Caco-2 (cell line): ENCODE measurements at regions of chr11 and their contacts with region 1.

Region 1: GRCh38 chr11:83724008-83724461 is 437.9 kb upstream of the CCDC90B start:
- DNase-seq: peak; percentile 81 to 83
- H3K4me3 ChIP-seq: peak overlapping the region; percentile 28
- H3K4me3 Mint-ChIP-seq: peak overlapping the region; percentile 84
- H3K27ac Mint-ChIP-seq: peak overlapping the region; percentile 96
- H3K4me1 ChIP-seq: peaks cover 48% of the 10 kb centered on the region
- H3K4me1 Mint-ChIP-seq: peaks cover 39% of the 10 kb centered on the region
- H3K27me3 ChIP-seq: no peaks in the 10 kb centered on the region
- H3K27me3 Mint-ChIP-seq: no peaks in the 10 kb centered on the region
- CTCF ChIP-seq: peak; percentile 75 to 78

Region 2: DNA sequence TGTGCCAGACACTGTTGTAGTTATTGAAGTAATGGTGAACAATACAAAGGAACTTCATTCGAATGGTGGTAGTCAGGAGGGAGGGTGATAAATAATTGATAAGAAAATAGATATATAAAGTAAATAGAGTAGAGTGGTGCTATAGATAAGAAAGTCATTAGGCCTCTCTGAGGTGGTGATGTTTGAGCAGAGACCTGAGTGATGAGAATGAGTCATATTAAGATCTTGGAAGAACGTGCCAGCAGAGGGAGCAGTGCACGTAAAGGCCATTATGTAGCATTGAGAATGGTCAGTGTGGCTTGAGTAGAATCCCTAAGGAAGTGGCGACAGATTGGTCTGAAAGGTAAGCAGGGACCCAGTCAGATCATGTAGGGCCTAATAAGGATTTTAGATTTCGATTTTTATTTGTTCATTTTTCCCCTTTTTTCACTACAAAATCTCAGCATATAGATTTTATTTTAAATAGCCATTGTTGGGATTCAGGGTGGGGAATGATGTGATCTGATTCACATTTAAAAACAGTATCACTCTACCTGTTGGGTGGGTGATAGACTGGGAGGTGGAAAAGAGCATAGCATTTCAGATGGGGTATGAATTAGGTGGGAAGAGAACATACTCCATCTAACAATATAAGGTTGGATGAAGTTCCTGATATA is 482.6 kb before region 1 on chr11:
- CTCF ChIA-PET with region 1: no interaction called
- POLR2A ChIA-PET with region 1: no interaction called
- intact Hi-C with region 1: loop called (anchors 1 kb)
- DNase-seq: peak; percentile 86
- H3K4me3 ChIP-seq: no peak overlapping the region
- H3K4me3 Mint-ChIP-seq: no peak overlapping the region
- H3K27ac Mint-ChIP-seq: no peak overlapping the region
- H3K4me1 ChIP-seq: peaks cover 9% of the 10 kb centered on the region
- H3K4me1 Mint-ChIP-seq: peaks cover 21% of the 10 kb centered on the region
- H3K27me3 ChIP-seq: no peaks in the 10 kb centered on the region
- H3K27me3 Mint-ChIP-seq: no peaks in the 10 kb centered on the region
- CTCF ChIP-seq: peak; percentile 86 to 92

Region 3: GRCh38 chr11:83292709-83293456 is 431.2 kb before region 1 on chr11:
- CTCF ChIA-PET with region 1: interaction called, 82 read pairs
- POLR2A ChIA-PET with region 1: interaction called, 4 read pairs
- intact Hi-C with region 1: loop called (anchors 1 kb)
- DNase-seq: peak; percentile 51 to 77
- H3K4me3 ChIP-seq: no peak overlapping the region
- H3K4me3 Mint-ChIP-seq: no peak overlapping the region
- H3K27ac Mint-ChIP-seq: no peak overlapping the region
- H3K4me1 ChIP-seq: no peaks in the 10 kb centered on the region
- H3K4me1 Mint-ChIP-seq: no peaks in the 10 kb centered on the region
- H3K27me3 ChIP-seq: no peaks in the 10 kb centered on the region; the same call in 1 of the 2 replicates
- H3K27me3 Mint-ChIP-seq: peaks cover 4% of the 10 kb centered on the region
- CTCF ChIP-seq: peak; percentile 89 to 95

Region 4: DNA sequence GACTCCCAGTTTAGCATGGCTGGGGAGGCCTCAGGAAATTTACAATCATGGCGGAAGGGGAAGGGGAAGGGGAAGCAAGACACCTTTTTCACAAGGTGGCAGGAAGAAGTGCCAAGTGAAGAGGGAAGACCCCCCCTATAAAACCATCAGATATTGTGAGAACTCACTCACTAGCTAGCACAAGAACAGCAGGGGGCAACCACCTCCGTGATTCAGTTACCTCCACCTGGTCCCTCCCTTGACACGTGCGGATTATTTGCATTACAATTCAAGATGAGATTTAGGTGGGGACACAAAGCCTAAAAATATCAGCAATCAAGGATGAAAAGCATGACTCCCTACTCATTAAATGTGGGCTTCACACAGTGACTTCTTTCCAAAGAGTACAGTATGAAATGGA is 282.9 kb before region 1 on chr11:
- CTCF ChIA-PET with region 1: interaction called, 4 read pairs
- POLR2A ChIA-PET with region 1: no interaction called
- intact Hi-C with region 1: loop called (anchors 1 kb)
- DNase-seq: no peak
- H3K4me3 ChIP-seq: no peak overlapping the region
- H3K4me3 Mint-ChIP-seq: no peak overlapping the region
- H3K27ac Mint-ChIP-seq: no peak overlapping the region
- H3K4me1 ChIP-seq: no peaks in the 10 kb centered on the region
- H3K4me1 Mint-ChIP-seq: no peaks in the 10 kb centered on the region
- H3K27me3 ChIP-seq: no peaks in the 10 kb centered on the region
- H3K27me3 Mint-ChIP-seq: no peaks in the 10 kb centered on the region
- CTCF ChIP-seq: peak; percentile 19 to 36

Region 5: DNA sequence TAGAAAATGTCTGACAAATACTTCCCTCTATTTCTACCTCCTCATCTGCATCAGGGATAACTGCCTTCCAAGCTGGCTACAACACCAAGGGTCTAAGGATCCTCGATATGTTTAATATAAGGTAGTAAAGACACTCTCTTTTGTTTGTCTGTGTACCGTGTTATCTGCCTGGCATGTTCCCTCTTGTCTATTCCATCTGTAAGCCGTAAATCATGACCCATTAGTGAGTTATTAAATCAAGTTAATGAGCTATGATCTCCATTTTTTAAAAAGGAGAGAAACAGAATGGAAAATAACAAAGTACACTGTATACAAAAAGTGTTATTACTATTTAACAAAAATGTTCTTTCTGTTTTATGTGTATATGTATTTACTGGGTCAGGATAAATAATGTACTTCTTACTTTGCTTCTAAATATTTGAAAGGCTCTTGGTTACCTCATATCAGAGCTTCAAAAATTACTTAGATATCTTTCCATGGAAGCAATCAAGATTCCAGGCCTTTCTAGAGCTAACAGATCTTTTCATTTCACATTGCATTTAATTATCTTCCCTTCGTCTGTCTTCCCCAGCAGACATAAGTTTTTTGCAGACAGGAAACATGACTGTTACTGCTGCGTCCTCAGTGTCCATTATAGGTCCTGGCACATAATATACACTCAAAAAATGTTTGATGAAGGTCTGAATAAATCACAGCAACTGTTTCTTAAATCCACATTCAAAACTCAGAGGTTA is 95.2 kb before region 1 on chr11:
- CTCF ChIA-PET with region 1: interaction called, 12 read pairs
- POLR2A ChIA-PET with region 1: no interaction called
- intact Hi-C with region 1: loop called (anchors 1 kb)
- DNase-seq: no peak
- H3K4me3 ChIP-seq: no peak overlapping the region
- H3K4me3 Mint-ChIP-seq: no peak overlapping the region
- H3K27ac Mint-ChIP-seq: no peak overlapping the region
- H3K4me1 ChIP-seq: peaks cover 9% of the 10 kb centered on the region
- H3K4me1 Mint-ChIP-seq: peaks cover 8% of the 10 kb centered on the region
- H3K27me3 ChIP-seq: no peaks in the 10 kb centered on the region
- H3K27me3 Mint-ChIP-seq: no peaks in the 10 kb centered on the region
- CTCF ChIP-seq: no peak

Region 6: DNA sequence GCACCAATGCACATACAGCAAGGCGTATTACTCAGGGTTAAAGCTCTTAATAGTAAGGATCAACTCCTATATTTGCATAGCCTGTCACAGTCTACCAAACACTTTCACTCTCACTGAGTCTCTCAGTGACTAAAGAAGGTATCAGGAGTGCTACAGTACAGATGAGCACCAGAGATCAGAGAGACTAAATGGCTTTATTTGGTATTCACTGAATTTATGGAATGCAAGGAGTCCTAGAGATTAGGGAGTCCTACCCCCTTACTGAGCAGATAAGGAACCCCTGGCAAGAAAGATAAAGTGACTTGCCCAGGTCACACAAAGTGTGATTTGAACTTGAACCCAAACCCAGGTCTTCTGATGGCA is 41.4 kb before region 1 on chr11:
- CTCF ChIA-PET with region 1: interaction called, 9 read pairs
- POLR2A ChIA-PET with region 1: interaction called, 3 read pairs
- intact Hi-C with region 1: loop called (anchors 1 kb)
- DNase-seq: peak; percentile 44 to 51
- H3K4me3 ChIP-seq: no peak overlapping the region
- H3K4me3 Mint-ChIP-seq: no peak overlapping the region
- H3K27ac Mint-ChIP-seq: no peak overlapping the region
- H3K4me1 ChIP-seq: peaks cover 51% of the 10 kb centered on the region
- H3K4me1 Mint-ChIP-seq: peaks cover 33% of the 10 kb centered on the region
- H3K27me3 ChIP-seq: no peaks in the 10 kb centered on the region
- H3K27me3 Mint-ChIP-seq: no peaks in the 10 kb centered on the region
- CTCF ChIP-seq: no peak

Region 7: GRCh38 chr11:83819933-83820549 is 96.0 kb after region 1 on chr11:
- CTCF ChIA-PET with region 1: interaction called, 5 read pairs
- POLR2A ChIA-PET with region 1: no interaction called
- intact Hi-C with region 1: loop called (anchors 1 kb)
- DNase-seq: peak in 1 of 2 experiments; percentile 53
- H3K4me3 ChIP-seq: no peak overlapping the region
- H3K4me3 Mint-ChIP-seq: no peak overlapping the region
- H3K27ac Mint-ChIP-seq: no peak overlapping the region
- H3K4me1 ChIP-seq: no peaks in the 10 kb centered on the region
- H3K4me1 Mint-ChIP-seq: no peaks in the 10 kb centered on the region
- H3K27me3 ChIP-seq: no peaks in the 10 kb centered on the region
- H3K27me3 Mint-ChIP-seq: peaks cover 5% of the 10 kb centered on the region
- CTCF ChIP-seq: peak; percentile 67 to 80